ENCODE measurements at regions of chr9 and their contacts with region 1.

Region 1: GRCh38 chr9:38107811-38108304 is 38.8 kb upstream of the SHB start:
- DNase-seq: no peak
- ATAC-seq: peak; percentile 76
- H3K4me3 ChIP-seq: no peak overlapping the region
- H3K27ac ChIP-seq: peak overlapping the region; percentile 30
- H3K4me1 ChIP-seq: peaks cover 10% of the 10 kb centered on the region
- H3K27me3 ChIP-seq: no peaks in the 10 kb centered on the region
- CTCF ChIP-seq: no peak
- EP300 ChIP-seq: no peak
- POLR2A ChIP-seq: no peak
- RAD21 ChIP-seq: no peak

Region 2: DNA sequence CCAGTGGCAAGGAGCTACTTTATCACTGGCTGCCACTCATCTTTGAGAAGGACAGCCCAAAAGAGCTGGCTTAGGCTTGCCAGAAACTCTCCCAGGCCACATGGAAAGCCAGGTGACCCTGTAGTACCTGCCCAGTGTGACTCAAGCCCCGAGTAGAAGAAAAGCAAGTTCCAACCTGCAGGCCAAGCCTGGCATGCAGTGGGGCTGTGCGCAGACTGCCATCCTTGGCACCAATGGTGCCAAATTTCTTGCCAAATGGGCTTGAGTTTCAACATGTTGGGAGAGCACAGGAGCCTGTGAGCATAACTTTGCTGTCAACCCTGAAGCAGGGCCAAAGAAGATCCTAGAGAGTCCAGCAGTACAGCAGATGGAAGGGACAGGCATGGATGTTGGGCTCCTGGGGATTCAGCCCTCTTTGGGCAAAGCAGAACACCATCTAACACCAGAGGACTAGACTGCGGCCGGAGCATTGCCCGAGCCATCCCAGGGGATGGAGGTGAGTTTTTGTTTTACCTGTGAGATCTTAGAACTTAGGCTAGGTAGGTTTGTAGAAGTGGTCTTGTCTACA is 11.5 kb before region 1 on chr9:
- CTCF ChIA-PET with region 1: interaction called, 148 read pairs
- POLR2A ChIA-PET with region 1: interaction called, 96 read pairs
- RAD21 ChIA-PET with region 1: interaction called, 205 read pairs
- SMC1A ChIA-PET with region 1: interaction called, 359 read pairs
- in situ Hi-C with region 1: no loop called
- intact Hi-C with region 1: no loop called
- DNase-seq: no peak
- ATAC-seq: no peak
- H3K4me3 ChIP-seq: no peak overlapping the region
- H3K27ac ChIP-seq: no peak overlapping the region
- H3K4me1 ChIP-seq: peaks cover 9% of the 10 kb centered on the region
- H3K27me3 ChIP-seq: no peaks in the 10 kb centered on the region
- CTCF ChIP-seq: no peak
- EP300 ChIP-seq: no peak
- POLR2A ChIP-seq: no peak
- RAD21 ChIP-seq: no peak

Region 3: DNA sequence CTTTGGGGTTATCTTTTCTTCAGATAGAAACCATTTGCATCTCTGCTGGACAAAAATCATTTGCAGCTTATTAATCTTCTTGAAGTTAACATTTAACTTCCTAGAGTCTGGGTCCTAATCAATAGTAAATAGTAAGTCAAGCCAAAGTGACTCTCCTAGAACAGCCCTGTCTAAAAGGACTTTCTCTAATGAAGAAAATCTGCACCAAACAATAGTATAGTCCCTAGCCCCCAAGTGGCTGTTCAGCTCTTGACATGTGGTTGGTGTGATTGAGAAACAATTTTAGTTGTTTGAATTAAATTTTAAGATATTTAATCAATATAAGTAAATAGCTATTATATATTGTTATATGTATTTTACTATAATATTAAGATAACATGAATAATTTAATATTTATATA is 25.7 kb after region 1 on chr9:
- CTCF ChIA-PET with region 1: interaction called, 22 read pairs
- POLR2A ChIA-PET with region 1: interaction called, 11 read pairs
- RAD21 ChIA-PET with region 1: interaction called, 33 read pairs
- SMC1A ChIA-PET with region 1: interaction called, 86 read pairs
- in situ Hi-C with region 1: no loop called
- intact Hi-C with region 1: no loop called
- DNase-seq: no peak
- ATAC-seq: no peak
- H3K4me3 ChIP-seq: no peak overlapping the region
- H3K27ac ChIP-seq: no peak overlapping the region
- H3K4me1 ChIP-seq: peaks cover 3% of the 10 kb centered on the region; the same call in 1 of the 2 replicates
- H3K27me3 ChIP-seq: peaks cover 0 to 2% of the 10 kb centered on the region in 2 experiments; a peak in 3 of 4 replicates
- CTCF ChIP-seq: no peak
- EP300 ChIP-seq: no peak
- POLR2A ChIP-seq: no peak
- RAD21 ChIP-seq: peak; percentile 29; the same call in 1 of the 2 replicates

Region 4: GRCh38 chr9:38154501-38155421 is 46.9 kb after region 1 on chr9:
- CTCF ChIA-PET with region 1: interaction called, 15 read pairs
- POLR2A ChIA-PET with region 1: interaction called, 3 read pairs
- RAD21 ChIA-PET with region 1: interaction called, 19 read pairs
- SMC1A ChIA-PET with region 1: interaction called, 25 read pairs
- in situ Hi-C with region 1: no loop called
- intact Hi-C with region 1: no loop called
- DNase-seq: no peak
- ATAC-seq: peak; percentile 20; the same call in 1 of the 3 replicates
- H3K4me3 ChIP-seq: no peak overlapping the region
- H3K27ac ChIP-seq: no peak overlapping the region
- H3K4me1 ChIP-seq: no peaks in the 10 kb centered on the region
- H3K27me3 ChIP-seq: no peaks in the 10 kb centered on the region; a peak in 1 of 4 replicates
- CTCF ChIP-seq: no peak
- EP300 ChIP-seq: no peak
- POLR2A ChIP-seq: no peak
- RAD21 ChIP-seq: no peak

Region 5: GRCh38 chr9:38183994-38184568 is 76.2 kb after region 1 on chr9:
- CTCF ChIA-PET with region 1: no interaction called
- POLR2A ChIA-PET with region 1: interaction called, 5 read pairs
- RAD21 ChIA-PET with region 1: interaction called, 10 read pairs
- SMC1A ChIA-PET with region 1: interaction called, 15 read pairs
- in situ Hi-C with region 1: no loop called
- intact Hi-C with region 1: no loop called
- DNase-seq: no peak
- ATAC-seq: no peak
- H3K4me3 ChIP-seq: no peak overlapping the region
- H3K27ac ChIP-seq: no peak overlapping the region
- H3K4me1 ChIP-seq: peaks cover 14% of the 10 kb centered on the region
- H3K27me3 ChIP-seq: peaks cover 0 to 2% of the 10 kb centered on the region in 2 experiments; a peak in 1 of 4 replicates
- CTCF ChIP-seq: no peak
- EP300 ChIP-seq: no peak
- POLR2A ChIP-seq: no peak
- RAD21 ChIP-seq: no peak

Region 6: DNA sequence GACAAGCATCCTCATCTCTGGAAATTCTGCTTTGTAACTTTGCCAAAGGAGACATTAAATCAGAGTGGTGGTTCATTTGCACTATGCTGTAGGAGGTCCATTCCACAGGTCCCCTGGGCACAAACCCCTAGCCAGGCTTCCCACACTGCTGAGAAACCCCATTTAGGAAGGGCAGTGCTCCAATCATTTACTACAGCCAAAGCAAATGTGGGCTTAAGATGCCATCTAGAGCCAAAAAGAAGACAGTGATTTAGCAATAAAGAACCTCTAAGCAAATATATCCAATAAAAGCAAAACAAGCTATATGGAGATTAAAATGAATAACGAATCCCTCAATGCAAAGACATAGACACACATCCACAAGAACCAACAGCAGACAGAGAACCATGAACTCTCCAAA is 155.7 kb after region 1 on chr9:
- CTCF ChIA-PET with region 1: no interaction called
- POLR2A ChIA-PET with region 1: no interaction called
- RAD21 ChIA-PET with region 1: interaction called, 10 read pairs
- SMC1A ChIA-PET with region 1: interaction called, 3 read pairs
- in situ Hi-C with region 1: no loop called
- intact Hi-C with region 1: no loop called
- DNase-seq: no peak
- ATAC-seq: peak; percentile 29; the same call in 1 of the 3 replicates
- H3K4me3 ChIP-seq: no peak overlapping the region
- H3K27ac ChIP-seq: no peak overlapping the region
- H3K4me1 ChIP-seq: no peaks in the 10 kb centered on the region
- H3K27me3 ChIP-seq: no peaks in the 10 kb centered on the region
- CTCF ChIP-seq: peak in 1 of 3 experiments; percentile 34; a peak in 1 of 6 replicates
- EP300 ChIP-seq: no peak
- POLR2A ChIP-seq: no peak
- RAD21 ChIP-seq: peak; percentile 70